Psoas muscle (tissue), 8 donors: ENCODE measurements at regions of chr6 and their contacts with region 1.

Region 1: GRCh38 chr6:43972913-43973300 is 154.3 kb downstream of the MRPL14 start:
- DNase-seq: peak; percentile 87 to 94
- ATAC-seq: peak; percentile 92 to 95 (median 93)
- H3K4me3 ChIP-seq: no peak overlapping the region
- H3K27ac ChIP-seq: peak overlapping the region; percentile 84
- H3K4me1 ChIP-seq: peaks cover 34% of the 10 kb centered on the region
- H3K27me3 ChIP-seq: no peaks in the 10 kb centered on the region
- CTCF ChIP-seq: no peak

Region 2: DNA sequence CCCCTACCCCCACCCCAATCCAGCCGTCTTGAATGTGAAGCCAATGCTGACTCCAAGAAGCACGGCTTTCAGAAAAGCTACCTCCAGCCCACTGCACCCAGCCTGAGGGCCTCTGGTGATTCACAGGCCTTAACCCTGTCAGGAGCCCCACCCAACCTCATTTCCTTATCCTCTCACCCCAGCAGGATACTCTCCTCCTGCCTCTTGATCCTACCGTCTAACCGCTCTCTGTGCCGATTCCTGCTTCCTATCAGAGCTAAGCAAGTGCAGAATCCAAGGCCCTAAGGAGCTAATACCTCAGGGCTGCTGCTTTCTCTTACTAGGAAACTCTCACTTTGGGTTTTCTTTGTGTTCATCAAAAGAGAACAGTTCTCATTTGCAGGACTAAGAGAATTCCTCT is 1568.4 kb before region 1 on chr6:
- intact Hi-C with region 1: no loop called
- DNase-seq: peak in 1 of 2 donors; percentile 27
- ATAC-seq: peak in 3 of 4 donors; percentile 36 to 47 (median 38)
- H3K4me3 ChIP-seq: no peak overlapping the region
- H3K27ac ChIP-seq: peak overlapping the region; percentile 46
- H3K4me1 ChIP-seq: no peaks in the 10 kb centered on the region
- H3K27me3 ChIP-seq: no peaks in the 10 kb centered on the region
- CTCF ChIP-seq: no peak

Region 3: DNA sequence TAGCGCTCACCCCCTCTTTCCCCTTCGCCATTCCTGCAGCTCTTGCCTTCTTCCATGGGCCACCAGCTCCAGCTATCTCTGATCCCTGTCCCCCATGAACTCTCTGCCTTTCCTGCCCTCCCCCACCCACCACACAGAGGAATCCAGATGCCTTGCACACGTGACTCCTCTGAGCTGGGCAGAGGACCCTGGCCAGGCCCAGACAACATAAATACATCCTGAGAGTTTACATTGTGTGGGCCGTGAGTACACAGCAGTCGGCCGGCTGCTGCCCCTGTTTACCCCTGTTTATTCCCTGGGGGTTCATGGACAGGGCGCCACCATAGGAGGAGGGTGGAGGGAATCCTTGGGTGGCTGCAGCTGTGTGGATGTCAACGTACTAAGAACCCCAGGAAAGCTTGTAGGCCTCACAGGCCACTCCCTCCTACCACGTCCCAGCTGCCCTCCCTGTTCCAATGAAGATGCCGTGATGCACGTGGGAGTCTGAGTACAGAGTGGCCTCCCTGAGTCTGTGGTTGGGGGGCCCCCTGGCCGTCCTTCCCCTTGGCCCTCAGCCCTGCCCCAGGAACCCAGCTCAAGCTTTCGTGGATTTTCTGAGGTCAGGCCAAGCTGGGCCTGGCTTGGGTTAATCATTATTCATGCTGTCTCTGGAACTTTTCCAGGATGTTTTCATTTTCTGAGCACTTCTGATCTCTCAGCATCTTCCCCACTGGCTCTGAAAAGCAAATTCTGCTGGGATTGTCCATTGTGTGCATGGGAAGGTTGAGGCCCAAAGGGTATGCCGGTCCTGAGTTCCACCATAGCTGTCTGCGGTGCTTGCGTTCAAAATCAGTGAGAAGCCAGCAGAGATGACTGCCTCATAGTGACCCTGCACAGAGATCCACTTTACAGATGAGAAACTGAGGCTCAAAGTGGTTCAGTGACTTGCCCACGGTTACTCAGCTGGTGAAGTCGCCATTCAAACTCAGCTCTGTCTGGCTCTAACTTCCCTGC is 18.0 kb after region 1 on chr6:
- intact Hi-C with region 1: loop called (anchors 1 to 2 kb)
- DNase-seq: no peak
- ATAC-seq: peak in 2 of 4 donors; percentile 0 to 18
- H3K4me3 ChIP-seq: peak overlapping the region; percentile 15
- H3K27ac ChIP-seq: peak overlapping the region; percentile 94
- H3K4me1 ChIP-seq: peaks cover 68% of the 10 kb centered on the region
- H3K27me3 ChIP-seq: no peaks in the 10 kb centered on the region
- CTCF ChIP-seq: no peak